ENCODE measurements at regions of chr17 and their contacts with region 1.

Region 1: DNA sequence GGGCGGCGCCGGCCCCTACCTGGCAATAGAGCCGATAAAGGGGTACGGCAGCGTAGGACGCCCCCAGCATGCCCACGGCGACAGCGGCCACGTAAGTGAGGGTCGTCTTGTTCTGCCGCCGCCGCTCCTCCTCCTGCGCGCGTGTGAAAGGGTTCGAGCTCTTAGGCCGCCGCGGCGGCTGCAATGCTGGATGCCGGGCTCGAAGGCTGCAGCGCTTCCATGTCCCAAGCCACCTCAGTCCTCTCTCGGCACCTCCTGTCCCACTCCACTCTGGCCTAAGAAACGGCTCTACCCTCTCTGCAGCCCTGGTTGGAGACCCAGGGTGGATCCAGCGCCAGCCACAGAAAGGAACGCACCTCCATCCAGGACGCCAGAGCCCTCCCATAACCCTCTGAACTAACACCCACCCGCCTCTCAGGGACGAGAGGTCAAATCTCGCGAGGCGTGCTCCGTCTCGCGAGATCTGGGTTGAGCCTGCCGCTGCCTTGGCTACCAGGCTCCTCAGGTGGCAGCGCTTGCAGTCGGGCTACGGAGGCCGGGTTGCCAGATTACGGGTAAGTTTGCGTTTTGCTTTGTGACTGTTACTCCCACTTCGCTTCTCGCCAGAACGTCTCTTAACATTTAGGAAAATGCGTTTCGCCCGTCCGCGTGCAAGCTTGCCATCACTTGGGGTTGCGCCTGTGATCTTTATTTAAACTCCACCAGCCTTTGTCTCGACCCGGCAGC is at the starts of genes COX11 and STXBP4:
- DNase-seq: peak; percentile 89 to 98 (median 93)
- ATAC-seq: peak; percentile 96
- H3K4me3 ChIP-seq: peak within 1 kb of the TSS; percentile 92
- H3K4me3 Mint-ChIP-seq: no peak within 1 kb of the TSS
- H3K27ac ChIP-seq: peak within 1 kb of the TSS; percentile 61 to 85
- H3K27ac Mint-ChIP-seq: no peak within 1 kb of the TSS
- H3K4me1 ChIP-seq: peaks cover 25% of the 10 kb centered on the region
- H3K4me1 Mint-ChIP-seq: peaks cover 5% of the 10 kb centered on the region
- H3K27me3 ChIP-seq: no peaks in the 10 kb centered on the region
- H3K27me3 Mint-ChIP-seq: no peaks in the 10 kb centered on the region
- CTCF ChIP-seq: no peak
- total RNA-seq, gene COX11: 24.1 to 30.3 TPM
- total RNA-seq, gene STXBP4: 5.1 to 5.4 TPM

Region 2: GRCh38 chr17:54807331-54807730 is 161.1 kb before region 1 on chr17:
- CTCF ChIA-PET with region 1: no interaction called
- POLR2A ChIA-PET with region 1: no interaction called
- intact Hi-C with region 1: no loop called
- DNase-seq: no peak
- ATAC-seq: no peak
- H3K4me3 ChIP-seq: no peak overlapping the region
- H3K4me3 Mint-ChIP-seq: no peak overlapping the region
- H3K27ac ChIP-seq: no peak overlapping the region
- H3K27ac Mint-ChIP-seq: no peak overlapping the region
- H3K4me1 ChIP-seq: no peaks in the 10 kb centered on the region
- H3K4me1 Mint-ChIP-seq: no peaks in the 10 kb centered on the region
- H3K27me3 ChIP-seq: no peaks in the 10 kb centered on the region
- H3K27me3 Mint-ChIP-seq: no peaks in the 10 kb centered on the region
- CTCF ChIP-seq: no peak

Region 3: DNA sequence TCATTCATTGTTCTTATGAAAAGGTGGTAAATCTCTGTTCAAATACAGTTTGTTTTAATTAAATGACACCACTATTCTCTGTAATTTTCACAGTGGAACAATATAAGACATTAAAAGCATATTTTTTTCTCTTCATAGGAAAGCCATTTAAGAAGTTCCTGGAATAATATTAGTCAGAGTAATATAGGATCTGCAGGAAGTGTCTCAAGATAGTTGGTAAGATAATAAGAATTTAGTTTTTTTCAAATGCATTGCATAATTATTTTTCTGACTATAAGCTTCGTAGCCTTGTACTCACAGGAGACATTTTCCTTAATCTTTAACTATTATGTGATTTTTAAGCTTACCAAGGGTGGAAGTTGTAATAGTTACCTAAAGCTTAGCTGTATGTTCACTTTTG is 17.1 kb after region 1 on chr17:
- CTCF ChIA-PET with region 1: no interaction called
- POLR2A ChIA-PET with region 1: no interaction called
- intact Hi-C with region 1: no loop called
- DNase-seq: no peak
- ATAC-seq: no peak
- H3K4me3 ChIP-seq: no peak overlapping the region
- H3K4me3 Mint-ChIP-seq: no peak overlapping the region
- H3K27ac ChIP-seq: no peak overlapping the region
- H3K27ac Mint-ChIP-seq: no peak overlapping the region
- H3K4me1 ChIP-seq: no peaks in the 10 kb centered on the region
- H3K4me1 Mint-ChIP-seq: no peaks in the 10 kb centered on the region
- H3K27me3 ChIP-seq: no peaks in the 10 kb centered on the region
- H3K27me3 Mint-ChIP-seq: no peaks in the 10 kb centered on the region
- CTCF ChIP-seq: no peak

Region 4: GRCh38 chr17:55238179-55238930 is 269.9 kb after region 1 on chr17:
- CTCF ChIA-PET with region 1: no interaction called
- POLR2A ChIA-PET with region 1: no interaction called
- intact Hi-C with region 1: loop called in 1 of 2 experiments (anchors 5 kb)
- DNase-seq: peak; percentile 75 to 96 (median 84)
- ATAC-seq: peak; percentile 89
- H3K4me3 ChIP-seq: peak overlapping the region; percentile 74
- H3K4me3 Mint-ChIP-seq: peak overlapping the region; percentile 89
- H3K27ac ChIP-seq: peak overlapping the region in 1 of 2 donors; percentile 65
- H3K27ac Mint-ChIP-seq: peak overlapping the region; percentile 87
- H3K4me1 ChIP-seq: peaks cover 19% of the 10 kb centered on the region
- H3K4me1 Mint-ChIP-seq: peaks cover 25% of the 10 kb centered on the region
- H3K27me3 ChIP-seq: peaks cover 0 to 3% of the 10 kb centered on the region in 2 experiments
- H3K27me3 Mint-ChIP-seq: peaks cover 23% of the 10 kb centered on the region
- CTCF ChIP-seq: no peak

Region 5: GRCh38 chr17:55264645-55265298 is 296.3 kb after region 1 on chr17 and contains the start of gene HLF:
- CTCF ChIA-PET with region 1: no interaction called
- POLR2A ChIA-PET with region 1: no interaction called
- intact Hi-C with region 1: loop called in 1 of 2 experiments (anchors 10 kb)
- DNase-seq: peak; percentile 53 to 93 (median 69)
- ATAC-seq: peak; percentile 90
- H3K4me3 ChIP-seq: peak within 1 kb of the TSS; percentile 60
- H3K4me3 Mint-ChIP-seq: peak within 1 kb of the TSS; percentile 86
- H3K27ac ChIP-seq: no peak within 1 kb of the TSS
- H3K27ac Mint-ChIP-seq: no peak within 1 kb of the TSS
- H3K4me1 ChIP-seq: peaks cover 33% of the 10 kb centered on the region
- H3K4me1 Mint-ChIP-seq: peaks cover 24% of the 10 kb centered on the region
- H3K27me3 ChIP-seq: peaks cover 41 to 49% of the 10 kb centered on the region in 2 experiments
- H3K27me3 Mint-ChIP-seq: peaks cover 65% of the 10 kb centered on the region
- CTCF ChIP-seq: no peak
- total RNA-seq, gene HLF: 4.3 to 4.9 TPM

Measured in CD4-positive, alpha-beta T cell (primary cell).